Activated T-helper 2 cell treated with anti-CD3 and anti-CD28 coated beads, Interferon-gamma antibody, Interleukin-2, Interleukin-4, amounts not matched to agents 10 μg/mL and 5 μg/mL and 100 μg/mL, durations not matched to agents 14 hours and 24 hours and 36 hours (primary cell): ENCODE measurements at regions of chr1 and their contacts with region 1.

Region 1: GRCh38 chr1:204828338-204828850 is 42.3 kb upstream of the NFASC start:
- DNase-seq: peak; percentile 26
- H3K4me3 Mint-ChIP-seq: no peak overlapping the region
- H3K27ac Mint-ChIP-seq: no peak overlapping the region
- H3K4me1 Mint-ChIP-seq: no peaks in the 10 kb centered on the region
- H3K27me3 Mint-ChIP-seq: peaks cover 45% of the 10 kb centered on the region

Region 2: GRCh38 chr1:204782118-204782700 is 46.2 kb before region 1 on chr1:
- intact Hi-C with region 1: no loop called
- DNase-seq: no peak
- H3K4me3 Mint-ChIP-seq: no peak overlapping the region
- H3K27ac Mint-ChIP-seq: no peak overlapping the region
- H3K4me1 Mint-ChIP-seq: no peaks in the 10 kb centered on the region
- H3K27me3 Mint-ChIP-seq: peaks cover 25% of the 10 kb centered on the region

Region 3: DNA sequence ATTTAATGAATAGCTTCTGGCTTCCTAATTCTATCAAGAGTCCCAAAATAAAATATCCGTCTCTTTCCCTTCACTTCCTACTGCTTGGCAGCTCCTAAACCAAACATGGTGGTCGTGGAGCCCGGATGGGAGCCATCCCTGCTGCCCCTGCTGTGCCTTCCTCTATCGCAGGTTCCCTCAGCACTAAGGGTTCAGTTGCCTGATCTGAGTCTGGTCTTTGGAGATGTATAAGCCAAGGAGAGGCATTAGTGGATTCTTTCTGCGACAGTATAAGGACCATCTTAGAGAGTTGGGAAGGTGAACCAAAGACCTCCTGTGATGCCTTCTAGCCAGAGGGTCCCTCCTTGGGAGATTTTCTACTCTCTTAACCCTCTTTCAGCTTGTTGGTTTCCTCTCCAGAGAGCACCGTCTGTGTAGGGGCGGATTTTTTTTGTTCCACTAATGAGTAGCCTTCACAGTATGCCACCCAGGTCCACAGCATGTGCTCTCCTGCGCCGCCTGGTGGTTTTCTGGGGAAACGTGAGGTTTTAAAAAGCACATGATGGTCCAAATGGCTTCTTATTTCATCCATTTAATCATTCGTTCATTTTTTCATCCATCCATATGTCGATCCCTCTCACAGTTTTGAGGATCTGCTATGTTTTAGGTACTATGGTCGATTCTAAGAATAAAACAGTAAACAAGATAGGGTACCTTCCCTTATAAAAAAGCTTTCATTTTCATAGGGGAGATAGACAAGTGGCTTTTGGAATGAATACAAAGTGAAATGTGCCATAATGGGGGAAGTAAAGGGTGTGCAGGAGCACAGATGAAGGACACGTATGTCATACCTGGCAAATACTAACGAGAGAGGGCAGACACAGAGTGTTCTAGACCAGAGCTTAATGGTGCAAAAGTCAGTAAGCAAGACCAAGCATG is 113.3 kb after region 1 on chr1:
- intact Hi-C with region 1: loop called (anchors 10 kb)
- DNase-seq: peak; percentile 40
- H3K4me3 Mint-ChIP-seq: no peak overlapping the region
- H3K27ac Mint-ChIP-seq: no peak overlapping the region
- H3K4me1 Mint-ChIP-seq: no peaks in the 10 kb centered on the region
- H3K27me3 Mint-ChIP-seq: peaks cover 3% of the 10 kb centered on the region

Region 4: DNA sequence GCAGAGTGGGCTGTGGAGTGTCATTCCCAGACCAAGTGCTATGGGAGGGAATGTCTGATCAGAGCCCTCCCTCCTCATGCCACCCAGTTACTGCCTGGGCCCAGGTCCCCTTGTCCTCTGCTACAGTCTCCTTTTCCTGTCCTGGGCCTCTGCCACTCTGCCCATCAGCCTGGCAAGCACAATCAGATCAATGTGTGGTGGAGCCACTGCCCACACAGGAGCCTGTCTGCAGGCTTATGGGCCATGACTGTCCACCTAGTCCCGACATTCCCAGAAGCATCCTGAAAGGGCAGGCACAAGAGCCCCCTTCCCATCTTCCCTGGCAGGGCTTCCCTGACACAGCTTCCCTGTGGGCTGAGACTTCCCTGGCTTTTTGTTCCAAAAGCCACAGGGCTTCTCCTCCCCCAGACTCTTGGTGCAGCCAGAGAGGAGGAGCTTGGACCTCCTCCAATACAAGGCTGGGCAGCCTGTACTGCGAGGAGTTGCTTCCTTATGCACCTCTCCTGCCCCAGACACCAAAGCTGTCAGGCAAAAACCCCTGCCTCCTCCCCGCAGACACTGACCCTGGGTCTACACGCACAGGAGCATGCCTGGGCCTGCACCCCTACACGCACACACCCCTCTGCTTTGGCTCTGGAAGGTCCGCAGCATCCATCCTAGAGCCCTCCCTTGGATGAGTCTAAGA is 185.4 kb after region 1 on chr1:
- intact Hi-C with region 1: no loop called
- DNase-seq: no peak
- H3K4me3 Mint-ChIP-seq: no peak overlapping the region
- H3K27ac Mint-ChIP-seq: no peak overlapping the region
- H3K4me1 Mint-ChIP-seq: no peaks in the 10 kb centered on the region
- H3K27me3 Mint-ChIP-seq: no peaks in the 10 kb centered on the region

Region 5: DNA sequence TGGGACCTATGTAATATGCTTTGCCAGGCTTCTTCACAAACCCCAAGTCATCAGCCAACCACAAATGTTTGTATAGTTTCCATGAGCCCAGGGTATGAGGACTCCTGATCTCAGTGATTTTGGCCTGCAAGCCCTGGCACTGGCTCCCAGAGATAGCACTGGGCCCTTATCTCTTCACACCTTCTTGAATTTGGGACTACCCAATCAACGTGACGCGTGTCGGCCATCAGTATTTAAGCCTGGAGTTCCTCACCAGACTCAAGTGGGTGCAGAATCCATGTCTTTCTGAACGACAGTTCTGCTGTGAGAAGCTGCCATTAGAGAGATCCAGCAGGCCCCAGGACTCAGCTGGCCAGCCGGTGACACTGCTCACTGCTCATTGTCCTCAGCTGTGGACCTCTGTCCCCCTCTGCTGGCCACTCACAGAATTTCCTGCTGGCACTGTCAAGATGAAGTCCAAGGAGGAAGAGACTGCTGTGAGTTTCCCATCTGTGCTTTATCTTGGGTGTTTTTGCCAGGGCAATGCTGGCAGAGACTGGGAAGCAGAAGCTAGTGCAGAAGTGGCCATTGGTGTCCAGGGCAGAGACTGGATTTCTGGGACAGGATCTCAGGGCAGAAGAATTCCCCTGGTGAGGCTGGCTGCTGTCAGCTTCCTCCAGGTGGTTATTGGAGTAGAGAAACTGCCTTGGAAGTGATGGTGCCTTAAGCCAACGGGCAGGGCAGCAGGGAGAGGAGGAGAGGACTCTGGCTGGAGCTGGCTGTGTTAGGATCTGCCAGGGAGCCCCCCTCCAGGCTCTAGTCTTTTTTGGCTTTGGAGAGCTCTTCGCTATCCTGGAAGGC is 427.8 kb after region 1 on chr1:
- intact Hi-C with region 1: no loop called
- DNase-seq: peak; percentile 74
- H3K4me3 Mint-ChIP-seq: no peak overlapping the region
- H3K27ac Mint-ChIP-seq: no peak overlapping the region
- H3K4me1 Mint-ChIP-seq: peaks cover 4% of the 10 kb centered on the region
- H3K27me3 Mint-ChIP-seq: no peaks in the 10 kb centered on the region